T-cell (primary cell): ENCODE measurements at regions of chr9 and their contacts with region 1.

Region 1: DNA sequence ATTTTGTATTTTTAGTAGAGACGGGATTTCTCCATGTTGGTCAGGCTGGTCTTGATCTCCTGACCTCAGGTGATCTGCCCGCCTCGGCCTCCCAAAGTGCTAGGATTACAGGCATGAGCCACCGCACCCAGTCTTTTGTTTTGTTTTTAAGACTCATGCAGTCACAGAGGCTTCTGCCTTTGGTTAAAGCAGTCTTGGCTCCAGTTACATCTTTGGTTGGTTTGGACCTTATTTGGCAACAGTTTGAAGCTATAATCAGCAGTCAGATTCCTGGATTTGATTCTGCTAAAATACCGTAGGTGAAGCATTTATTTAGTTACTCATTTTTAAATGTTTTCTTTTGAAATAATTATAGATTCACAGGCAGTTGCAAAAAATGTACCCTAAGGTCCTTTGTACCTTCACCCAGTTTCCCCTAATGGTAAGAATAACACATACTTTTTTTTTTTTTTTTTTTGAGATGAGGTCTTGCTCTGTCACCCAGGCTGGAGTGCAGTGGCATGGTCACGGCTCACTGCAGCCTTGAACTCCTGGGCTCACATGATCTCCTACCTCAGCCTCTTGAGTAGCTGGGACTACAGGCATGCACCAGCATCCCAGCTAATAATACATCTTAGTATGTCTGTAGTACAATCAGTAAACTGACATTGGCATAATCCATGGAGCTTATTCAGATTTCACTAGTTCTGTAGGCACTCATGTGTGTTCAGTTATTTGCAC is 15.7 kb downstream of the USP20 start:
- DNase-seq: no peak
- ATAC-seq: no peak
- H3K4me3 ChIP-seq: no peak overlapping the region
- H3K4me3 Mint-ChIP-seq: no peak overlapping the region
- H3K27ac ChIP-seq: no peak overlapping the region
- H3K27ac Mint-ChIP-seq: peak overlapping the region in 1 of 2 donors; percentile 73
- H3K4me1 ChIP-seq: peaks cover 22 to 28% of the 10 kb centered on the region in 2 experiments
- H3K4me1 Mint-ChIP-seq: peaks cover 44 to 57% (median 48%) of the 10 kb centered on the region in 3 donors
- H3K27me3 ChIP-seq: no peaks in the 10 kb centered on the region
- H3K27me3 Mint-ChIP-seq: no peaks in the 10 kb centered on the region

Region 2: DNA sequence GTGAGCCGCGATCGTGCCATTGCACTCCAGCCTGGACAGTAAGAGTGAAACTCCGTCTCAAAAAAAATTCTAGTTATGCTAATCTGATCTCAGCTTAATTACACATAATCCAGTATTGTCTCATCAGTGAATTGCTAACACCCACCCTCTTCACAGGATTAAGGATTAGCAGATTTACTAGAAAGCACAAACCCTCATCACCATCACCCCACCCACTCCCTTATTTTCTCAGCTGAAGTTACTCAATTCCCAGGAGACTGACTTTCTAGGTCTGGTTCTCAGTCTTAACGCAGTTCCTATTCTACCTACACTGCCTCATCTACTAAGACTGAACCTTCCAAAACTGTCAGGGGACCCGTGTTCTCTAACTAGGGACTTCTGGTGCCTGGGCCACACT is 39.0 kb before region 1 on chr9:
- CTCF ChIA-PET with region 1: no interaction called
- POLR2A ChIA-PET with region 1: interaction called in 1 of 2 experiments, 14 read pairs
- DNase-seq: no peak
- ATAC-seq: no peak
- H3K4me3 ChIP-seq: no peak overlapping the region
- H3K4me3 Mint-ChIP-seq: no peak overlapping the region
- H3K27ac ChIP-seq: no peak overlapping the region
- H3K27ac Mint-ChIP-seq: no peak overlapping the region
- H3K4me1 ChIP-seq: peaks cover 0 to 9% of the 10 kb centered on the region in 2 experiments
- H3K4me1 Mint-ChIP-seq: peaks cover 18 to 29% (median 19%) of the 10 kb centered on the region in 3 donors
- H3K27me3 ChIP-seq: no peaks in the 10 kb centered on the region
- H3K27me3 Mint-ChIP-seq: no peaks in the 10 kb centered on the region

Region 3: DNA sequence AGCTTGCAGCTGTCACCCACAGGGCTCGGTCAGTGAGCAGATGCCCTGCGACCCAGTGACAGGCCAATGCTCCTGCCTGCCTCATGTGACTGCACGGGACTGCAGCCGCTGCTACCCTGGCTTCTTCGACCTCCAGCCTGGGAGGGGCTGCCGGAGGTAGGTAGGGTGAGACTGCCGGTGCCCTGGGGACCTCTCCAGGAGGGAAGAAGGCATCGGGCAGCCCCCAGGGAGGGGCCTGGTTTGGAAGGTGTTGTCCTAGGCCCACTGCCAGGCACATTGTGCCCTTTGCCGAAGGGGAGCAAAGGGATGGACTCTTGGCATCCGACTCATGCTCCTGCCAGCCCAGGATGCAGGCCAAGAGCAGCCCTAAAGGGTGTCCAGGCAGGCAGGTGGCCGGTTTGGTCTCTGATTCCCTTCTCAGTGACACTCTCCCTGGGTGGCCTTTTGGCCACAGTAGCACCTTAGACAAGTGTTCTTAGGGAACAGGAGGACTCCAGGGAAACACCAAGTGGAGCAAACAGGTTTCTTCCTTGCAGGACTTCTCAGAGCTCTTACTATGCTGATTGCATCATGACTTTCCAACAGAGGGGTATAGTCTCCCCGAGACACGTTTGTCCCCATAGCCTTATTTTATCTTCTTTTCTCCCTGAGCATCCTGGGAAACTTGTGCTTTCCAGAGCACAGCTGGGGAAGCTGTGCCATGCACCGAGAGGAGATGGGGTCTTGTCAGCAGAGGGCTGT is 1217.3 kb after region 1 on chr9:
- CTCF ChIA-PET with region 1: no interaction called
- POLR2A ChIA-PET with region 1: no interaction called
- DNase-seq: no peak
- ATAC-seq: no peak
- H3K4me3 ChIP-seq: no peak overlapping the region
- H3K4me3 Mint-ChIP-seq: no peak overlapping the region
- H3K27ac ChIP-seq: no peak overlapping the region
- H3K27ac Mint-ChIP-seq: no peak overlapping the region
- H3K4me1 ChIP-seq: no peaks in the 10 kb centered on the region
- H3K4me1 Mint-ChIP-seq: no peaks in the 10 kb centered on the region
- H3K27me3 ChIP-seq: peaks cover 0 to 14% of the 10 kb centered on the region in 2 experiments
- H3K27me3 Mint-ChIP-seq: peaks cover 0 to 11% of the 10 kb centered on the region in 2 donors